GM23248 (cell line): ENCODE measurements at regions of chr17 and their contacts with region 1.

Region 1: GRCh38 chr17:1783834-1784611 is 22.2 kb downstream of the SERPINF1 start:
- DNase-seq: peak; percentile 89
- H3K4me3 ChIP-seq: peak overlapping the region; percentile 30; the same call in 1 of the 2 replicates
- H3K27ac ChIP-seq: peak overlapping the region; percentile 74
- H3K4me1 ChIP-seq: peaks cover 34% of the 10 kb centered on the region
- H3K27me3 ChIP-seq: no peaks in the 10 kb centered on the region

Region 2: GRCh38 chr17:1653735-1654134 is 130.3 kb before region 1 on chr17:
- in situ Hi-C with region 1: no loop called
- DNase-seq: no peak
- H3K4me3 ChIP-seq: no peak overlapping the region
- H3K27ac ChIP-seq: no peak overlapping the region
- H3K4me1 ChIP-seq: peaks cover 7% of the 10 kb centered on the region; the same call in 1 of the 2 replicates
- H3K27me3 ChIP-seq: no peaks in the 10 kb centered on the region

Region 3: DNA sequence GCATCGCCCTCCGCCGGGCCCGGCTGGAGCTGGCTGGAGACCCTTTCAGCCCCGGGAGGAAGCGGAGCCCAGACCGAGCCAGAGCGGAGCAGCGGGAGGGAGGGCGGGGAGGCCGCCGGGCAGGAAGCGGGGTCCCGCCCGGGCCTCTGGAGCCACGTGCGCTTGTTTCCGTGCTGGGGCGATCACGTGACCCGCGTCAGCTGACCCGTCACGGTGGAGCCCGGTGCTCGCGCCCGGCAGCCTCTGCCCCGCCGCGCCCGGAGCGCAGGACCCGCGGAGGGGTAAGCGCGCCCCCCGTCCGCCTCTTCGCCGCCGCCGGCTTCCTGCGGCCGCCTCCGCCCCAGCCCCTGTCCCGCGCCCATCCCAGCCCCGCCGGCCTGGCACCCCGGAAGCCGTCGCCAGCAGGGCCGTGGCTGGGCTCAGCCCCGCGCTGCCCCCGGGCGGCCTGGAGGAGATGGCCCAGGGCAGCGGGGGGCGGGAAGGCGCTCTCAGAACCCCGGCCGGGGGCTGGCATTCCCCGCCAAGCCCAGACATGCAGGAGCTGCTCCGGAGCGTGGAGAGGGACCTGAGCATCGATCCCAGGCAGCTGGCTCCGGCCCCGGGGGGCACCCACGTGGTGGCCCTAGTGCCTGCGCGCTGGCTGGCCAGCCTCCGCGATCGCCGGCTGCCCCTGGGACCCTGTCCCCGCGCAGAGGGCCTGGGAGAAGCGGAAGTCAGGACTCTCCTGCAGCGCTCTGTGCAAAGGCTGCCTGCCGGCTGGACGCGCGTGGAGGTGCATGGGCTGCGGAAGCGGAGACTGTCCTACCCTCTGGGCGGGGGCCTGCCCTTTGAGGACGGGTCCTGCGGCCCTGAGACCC is 59.3 kb before region 1 on chr17 and contains the start of gene WDR81:
- in situ Hi-C with region 1: loop called (anchors 10 kb)
- DNase-seq: peak; percentile 95
- H3K4me3 ChIP-seq: peak within 1 kb of the TSS; percentile 70
- H3K27ac ChIP-seq: peak within 1 kb of the TSS; percentile 55
- H3K4me1 ChIP-seq: no peaks in the 10 kb centered on the region; the same call in 1 of the 2 replicates
- H3K27me3 ChIP-seq: no peaks in the 10 kb centered on the region
- total RNA-seq, gene WDR81: 23.0 and 23.9 TPM in 2 replicates

Region 4: DNA sequence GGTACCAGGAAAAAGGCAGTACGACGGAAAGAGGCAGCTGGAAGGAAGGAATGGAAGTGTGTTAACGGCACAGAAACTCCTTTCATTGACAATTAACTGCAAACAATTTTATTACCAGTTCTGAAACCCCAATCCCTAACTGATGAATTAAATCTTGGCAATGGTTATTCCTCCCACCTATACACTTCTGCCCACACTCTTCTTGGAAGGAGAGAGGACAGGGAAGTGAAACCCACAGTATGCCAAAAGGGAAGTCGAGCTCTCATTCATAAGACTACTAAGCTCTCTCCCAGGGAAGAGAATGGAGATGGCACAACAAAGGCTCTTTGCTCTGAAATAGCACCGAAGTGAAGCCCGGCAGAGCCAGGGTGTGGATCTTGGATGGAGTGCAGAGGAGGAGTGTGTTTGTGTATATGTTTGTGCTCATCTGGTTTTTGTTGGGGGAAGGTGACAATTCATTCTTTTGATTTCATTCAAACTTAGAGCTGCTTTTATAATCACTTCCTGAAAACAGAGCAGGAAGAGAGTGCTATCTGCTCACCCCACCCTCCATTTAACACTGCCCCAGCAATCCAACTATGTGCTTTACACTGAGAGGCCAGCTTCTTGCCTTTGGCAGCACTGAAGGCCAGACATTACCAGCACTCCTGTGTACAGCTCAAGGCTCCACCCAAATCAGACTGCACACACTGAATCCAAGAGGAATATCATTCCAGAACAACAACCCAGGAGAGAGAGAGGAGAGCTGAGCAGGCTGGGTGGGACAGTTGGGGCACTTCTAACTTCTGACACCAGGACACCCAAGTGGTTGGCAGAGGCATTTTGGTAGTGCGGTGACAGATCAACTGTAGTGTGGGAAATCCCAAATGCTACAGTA is 339.6 kb after region 1 on chr17:
- in situ Hi-C with region 1: no loop called
- DNase-seq: peak; percentile 48
- H3K4me3 ChIP-seq: no peak overlapping the region
- H3K27ac ChIP-seq: peak overlapping the region; percentile 55
- H3K4me1 ChIP-seq: peaks cover 27% of the 10 kb centered on the region
- H3K27me3 ChIP-seq: no peaks in the 10 kb centered on the region